Heart left ventricle (tissue), 16 donors: ENCODE measurements at regions of chr3 and their contacts with region 1.

Region 1: DNA sequence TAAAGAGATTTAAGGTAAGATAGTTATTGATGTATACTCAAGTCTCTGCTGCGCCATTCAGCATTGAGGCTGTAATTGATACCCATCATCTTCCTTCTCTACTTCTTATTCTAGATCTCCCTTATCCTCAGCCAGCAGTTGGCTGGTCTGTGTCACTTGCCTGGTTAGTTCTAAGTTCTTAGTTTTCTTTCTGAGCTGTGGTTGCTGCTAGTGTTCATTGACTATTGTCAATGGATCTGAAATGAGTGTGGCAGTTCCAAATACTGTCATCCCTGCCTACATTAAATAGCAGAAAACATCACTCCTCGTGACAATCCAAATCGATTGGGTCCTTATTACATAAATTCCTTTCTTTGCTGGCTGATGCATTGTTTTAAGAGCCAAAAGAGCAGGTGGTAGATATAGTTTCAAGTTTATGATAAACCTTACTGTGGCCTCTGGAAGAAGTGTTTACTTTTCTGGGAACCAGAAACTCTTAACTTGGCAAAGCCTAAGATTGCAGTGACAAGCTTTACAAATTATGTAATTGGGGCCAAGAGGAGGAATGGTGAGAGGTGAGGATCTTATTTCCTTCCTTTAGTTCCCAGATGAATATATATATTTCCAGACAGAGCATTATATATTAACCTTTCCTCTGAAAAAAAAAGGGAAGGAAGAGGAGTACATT is 168.0 kb downstream of the GMNC start:
- DNase-seq: no peak
- ATAC-seq: no peak
- H3K4me3 ChIP-seq: no peak overlapping the region
- H3K27ac ChIP-seq: no peak overlapping the region
- H3K4me1 ChIP-seq: peaks cover 0 to 7% (median 0%) of the 10 kb centered on the region in 12 donors
- H3K27me3 ChIP-seq: no peaks in the 10 kb centered on the region
- CTCF ChIP-seq: no peak
- POLR2A ChIP-seq: no peak

Region 2: GRCh38 chr3:190629088-190629487 is 65.4 kb before region 1 on chr3:
- intact Hi-C with region 1: loop called in 1 of 10 experiments (anchors 2 kb)
- DNase-seq: no peak
- ATAC-seq: no peak
- H3K4me3 ChIP-seq: no peak overlapping the region
- H3K27ac ChIP-seq: no peak overlapping the region
- H3K4me1 ChIP-seq: no peaks in the 10 kb centered on the region
- H3K27me3 ChIP-seq: no peaks in the 10 kb centered on the region
- CTCF ChIP-seq: no peak
- POLR2A ChIP-seq: no peak